PC-9 (cell line): ENCODE measurements at regions of chr1 and their contacts with region 1.

Region 1: GRCh38 chr1:45303582-45304310 is 22.9 kb upstream of the HPDL start:
- DNase-seq: peak; percentile 89 to 96
- H3K4me3 ChIP-seq: peak overlapping the region; percentile 60
- H3K27ac ChIP-seq: peak overlapping the region; percentile 72
- H3K4me1 ChIP-seq: peaks cover 10% of the 10 kb centered on the region
- H3K27me3 ChIP-seq: no peaks in the 10 kb centered on the region
- CTCF ChIP-seq: peak; percentile 69

Region 2: GRCh38 chr1:43622471-43622870 is 1681.3 kb before region 1 on chr1:
- CTCF ChIA-PET with region 1: interaction called, 19 read pairs
- POLR2A ChIA-PET with region 1: no interaction called
- intact Hi-C with region 1: no loop called
- DNase-seq: no peak
- H3K4me3 ChIP-seq: no peak overlapping the region
- H3K27ac ChIP-seq: no peak overlapping the region
- H3K4me1 ChIP-seq: no peaks in the 10 kb centered on the region
- H3K27me3 ChIP-seq: no peaks in the 10 kb centered on the region
- CTCF ChIP-seq: no peak

Region 3: DNA sequence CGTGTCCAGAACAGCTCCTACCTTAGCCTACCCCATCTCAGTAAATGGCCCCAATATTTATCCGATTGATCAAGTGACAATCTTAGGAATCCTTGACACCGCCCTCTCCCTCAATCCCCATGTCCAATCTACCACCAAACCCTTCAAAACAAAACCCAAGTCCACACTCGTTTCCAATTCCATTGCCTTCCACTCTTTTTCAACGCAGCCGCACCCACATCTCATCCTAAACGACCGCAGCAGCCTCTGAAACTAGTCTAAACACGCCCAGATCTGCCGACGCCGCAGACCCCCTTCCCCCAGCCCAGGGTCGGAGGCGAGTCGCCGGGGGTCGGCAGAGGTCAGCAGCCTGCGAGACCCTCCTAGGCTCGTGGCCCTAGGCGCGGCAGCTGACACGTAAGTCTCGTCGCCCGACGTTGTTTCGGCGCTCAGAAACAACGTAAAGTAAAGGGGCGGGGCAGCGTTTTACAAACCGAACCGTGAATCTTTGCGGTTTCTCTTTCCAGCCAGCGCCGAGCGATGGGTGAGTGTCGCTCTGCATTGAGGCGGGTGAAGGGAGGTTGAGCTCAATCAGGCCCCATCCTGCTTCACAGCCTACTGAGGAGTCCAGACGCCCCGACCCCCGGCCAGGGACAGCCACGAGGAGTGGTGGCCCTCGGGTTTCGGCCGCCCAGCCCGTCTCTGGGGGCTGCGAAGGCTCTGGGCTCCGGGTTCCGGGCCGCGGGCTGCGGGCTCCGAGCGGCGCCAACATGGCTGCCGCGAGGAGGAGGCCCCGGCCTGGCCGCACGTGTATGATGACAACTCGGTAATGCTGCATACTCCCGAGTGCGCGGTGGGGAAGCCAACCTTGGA is 528.4 kb before region 1 on chr1 and contains the start of gene RPS8:
- CTCF ChIA-PET with region 1: interaction called, 15 read pairs
- POLR2A ChIA-PET with region 1: no interaction called
- intact Hi-C with region 1: no loop called
- DNase-seq: peak; percentile 86 to 87
- H3K4me3 ChIP-seq: peak within 1 kb of the TSS; percentile 95
- H3K27ac ChIP-seq: peak within 1 kb of the TSS; percentile 98
- H3K4me1 ChIP-seq: peaks cover 22% of the 10 kb centered on the region
- H3K27me3 ChIP-seq: no peaks in the 10 kb centered on the region
- CTCF ChIP-seq: 0 out of 2 replicates have a peak, but pooled peaks have one; percentile 10
- total RNA-seq, gene RPS8: 2,059 and 2,176 TPM in 2 replicates

Region 4: DNA sequence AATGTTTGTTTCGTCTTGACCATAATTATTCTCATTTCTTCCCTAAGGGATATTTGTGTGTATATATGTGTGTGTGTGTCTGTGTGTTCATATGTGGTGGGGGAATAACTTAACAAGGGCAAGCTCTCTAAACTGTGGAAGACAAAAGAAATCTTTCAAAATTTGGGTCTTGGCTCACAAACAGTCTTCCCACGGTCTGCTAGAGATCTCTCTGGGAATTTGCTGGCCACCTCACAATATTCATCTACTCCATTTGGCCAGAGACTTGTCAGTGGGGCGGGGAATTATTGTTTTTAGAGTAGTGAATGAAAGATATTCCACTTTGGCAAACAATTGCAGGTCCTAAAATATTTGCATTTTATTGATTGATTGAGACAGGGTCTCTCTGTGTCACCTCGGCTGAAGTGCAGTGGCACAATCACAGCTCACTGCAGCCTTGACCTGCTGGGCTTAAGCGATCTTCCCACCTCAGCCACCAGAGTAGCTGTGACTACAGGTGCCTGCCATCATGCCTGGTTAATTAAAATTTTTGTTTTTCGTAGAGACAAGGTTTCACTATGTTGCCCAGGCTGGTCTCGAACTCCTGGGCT is 309.3 kb before region 1 on chr1:
- CTCF ChIA-PET with region 1: no interaction called
- POLR2A ChIA-PET with region 1: interaction called, 10 read pairs
- intact Hi-C with region 1: no loop called
- DNase-seq: no peak
- H3K4me3 ChIP-seq: no peak overlapping the region
- H3K27ac ChIP-seq: no peak overlapping the region
- H3K4me1 ChIP-seq: no peaks in the 10 kb centered on the region
- H3K27me3 ChIP-seq: no peaks in the 10 kb centered on the region
- CTCF ChIP-seq: no peak

Region 5: GRCh38 chr1:45339789-45340570 is 36.2 kb after region 1 on chr1 and contains the starts of genes MUTYH and TOE1:
- CTCF ChIA-PET with region 1: interaction called, 39 read pairs
- POLR2A ChIA-PET with region 1: interaction called, 42 read pairs
- intact Hi-C with region 1: loop called (anchors 1 kb)
- DNase-seq: peak; percentile 79 to 97
- H3K4me3 ChIP-seq: peak within 1 kb of the TSS; percentile 68
- H3K27ac ChIP-seq: peak within 1 kb of the TSS; percentile 86
- H3K4me1 ChIP-seq: peaks cover 55% of the 10 kb centered on the region
- H3K27me3 ChIP-seq: no peaks in the 10 kb centered on the region
- CTCF ChIP-seq: 0 out of 2 replicates have a peak, but pooled peaks have one; percentile 24
- total RNA-seq, gene MUTYH: 52.4 and 53.2 TPM in 2 replicates
- total RNA-seq, gene TOE1: 14.5 and 20.4 TPM in 2 replicates

Region 6: GRCh38 chr1:45499415-45499769 is 195.6 kb after region 1 on chr1:
- CTCF ChIA-PET with region 1: interaction called, 14 read pairs
- POLR2A ChIA-PET with region 1: interaction called, 9 read pairs
- intact Hi-C with region 1: no loop called
- DNase-seq: no peak
- H3K4me3 ChIP-seq: peak overlapping the region; percentile 79
- H3K27ac ChIP-seq: no peak overlapping the region
- H3K4me1 ChIP-seq: peaks cover 18% of the 10 kb centered on the region
- H3K27me3 ChIP-seq: no peaks in the 10 kb centered on the region
- CTCF ChIP-seq: no peak

Region 7: DNA sequence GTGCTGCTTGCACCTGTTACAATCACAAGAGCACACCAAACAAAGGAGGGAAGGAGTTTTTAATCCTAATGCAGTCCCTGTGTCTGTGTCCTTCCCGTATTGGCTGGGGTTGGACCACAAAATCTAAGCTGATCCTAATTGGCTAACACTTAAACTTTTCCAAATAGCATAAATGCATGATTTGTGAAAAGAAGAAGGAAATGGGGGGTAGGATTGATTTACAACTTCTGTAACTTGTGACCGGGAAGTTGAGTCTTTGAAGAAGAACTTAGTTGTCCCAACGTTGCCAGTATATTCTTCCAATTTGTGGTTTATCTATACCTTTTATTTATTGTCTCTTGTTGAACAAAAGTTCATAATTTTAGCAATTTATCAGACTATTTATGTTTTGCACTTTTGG is 458.5 kb after region 1 on chr1:
- CTCF ChIA-PET with region 1: no interaction called
- POLR2A ChIA-PET with region 1: no interaction called
- intact Hi-C with region 1: no loop called
- DNase-seq: no peak
- H3K4me3 ChIP-seq: no peak overlapping the region
- H3K27ac ChIP-seq: no peak overlapping the region
- H3K4me1 ChIP-seq: no peaks in the 10 kb centered on the region
- H3K27me3 ChIP-seq: no peaks in the 10 kb centered on the region
- CTCF ChIP-seq: no peak

Region 8: DNA sequence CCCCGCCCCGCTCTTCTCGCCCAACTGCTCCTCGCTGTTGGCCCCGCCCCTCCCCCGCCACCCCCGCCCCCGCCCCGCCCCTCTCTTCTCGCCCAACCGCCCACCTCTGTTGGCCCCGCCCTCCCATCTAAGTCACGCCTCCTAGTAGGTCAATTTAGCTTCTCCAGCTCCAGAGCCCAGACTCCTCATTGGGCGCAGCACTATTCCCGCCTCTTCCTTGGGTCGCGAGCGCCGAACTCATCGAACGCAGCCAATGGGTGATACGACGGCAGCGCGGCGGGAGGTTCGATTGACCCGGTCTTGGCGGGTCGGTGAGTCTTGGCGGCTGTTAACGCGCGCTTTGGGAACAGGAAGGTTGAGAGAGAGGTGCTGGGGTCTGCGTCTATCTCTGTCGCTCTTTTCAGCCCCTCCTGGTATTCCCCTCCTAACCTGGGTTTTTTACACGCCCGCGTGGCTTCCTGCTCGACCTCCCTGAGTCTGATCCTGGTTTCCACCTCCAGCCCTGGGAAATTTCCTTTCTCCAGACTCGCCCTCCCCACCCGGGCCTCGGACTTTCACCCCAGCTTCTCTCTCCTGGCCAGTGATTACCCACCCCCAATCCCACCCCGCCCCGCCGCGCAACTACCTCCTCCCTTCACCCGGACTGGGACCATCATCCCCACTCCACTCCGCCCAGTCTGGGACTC is 943.8 kb after region 1 on chr1 and contains the start of gene RAD54L:
- CTCF ChIA-PET with region 1: interaction called, 13 read pairs
- POLR2A ChIA-PET with region 1: no interaction called
- intact Hi-C with region 1: no loop called
- DNase-seq: peak; percentile 95 to 99
- H3K4me3 ChIP-seq: peak within 1 kb of the TSS; percentile 72
- H3K27ac ChIP-seq: peak within 1 kb of the TSS; percentile 60
- H3K4me1 ChIP-seq: peaks cover 21% of the 10 kb centered on the region
- H3K27me3 ChIP-seq: no peaks in the 10 kb centered on the region
- CTCF ChIP-seq: no peak
- total RNA-seq, gene RAD54L: 44.8 and 56.4 TPM in 2 replicates